ENCODE measurements at regions of chr11 and their contacts with region 1.

Region 1: GRCh38 chr11:102109896-102110760 is at the start of gene YAP1:
- DNase-seq: peak; percentile 86
- H3K4me3 ChIP-seq: peak within 1 kb of the TSS; percentile 94 to 100 (median 95)
- H3K27ac ChIP-seq: peak within 1 kb of the TSS; percentile 99 to 100
- H3K4me1 ChIP-seq: no peaks in the 10 kb centered on the region
- H3K27me3 ChIP-seq: no peaks in the 10 kb centered on the region
- CTCF ChIP-seq: peak in 1 of 3 donors; percentile 34
- POLR2A ChIP-seq: no peak
- total RNA-seq, gene YAP1: 179 to 215 (median 184) TPM

Region 2: GRCh38 chr11:101133190-101133589 is 976.9 kb before region 1 on chr11:
- intact Hi-C with region 1: no loop called
- DNase-seq: no peak
- H3K4me3 ChIP-seq: no peak overlapping the region
- H3K27ac ChIP-seq: no peak overlapping the region
- H3K4me1 ChIP-seq: no peaks in the 10 kb centered on the region
- H3K27me3 ChIP-seq: peaks cover 0 to 8% of the 10 kb centered on the region in 2 donors
- CTCF ChIP-seq: no peak
- POLR2A ChIP-seq: no peak

Region 3: GRCh38 chr11:102177974-102178631 is 68.0 kb after region 1 on chr11:
- intact Hi-C with region 1: loop called (anchors 10 kb)
- DNase-seq: peak in 1 of 2 donors; percentile 39
- H3K4me3 ChIP-seq: peak overlapping the region in 1 of 3 donors; percentile 16
- H3K27ac ChIP-seq: peak overlapping the region; percentile 87 to 90
- H3K4me1 ChIP-seq: no peaks in the 10 kb centered on the region
- H3K27me3 ChIP-seq: no peaks in the 10 kb centered on the region
- CTCF ChIP-seq: no peak
- POLR2A ChIP-seq: no peak

Region 4: DNA sequence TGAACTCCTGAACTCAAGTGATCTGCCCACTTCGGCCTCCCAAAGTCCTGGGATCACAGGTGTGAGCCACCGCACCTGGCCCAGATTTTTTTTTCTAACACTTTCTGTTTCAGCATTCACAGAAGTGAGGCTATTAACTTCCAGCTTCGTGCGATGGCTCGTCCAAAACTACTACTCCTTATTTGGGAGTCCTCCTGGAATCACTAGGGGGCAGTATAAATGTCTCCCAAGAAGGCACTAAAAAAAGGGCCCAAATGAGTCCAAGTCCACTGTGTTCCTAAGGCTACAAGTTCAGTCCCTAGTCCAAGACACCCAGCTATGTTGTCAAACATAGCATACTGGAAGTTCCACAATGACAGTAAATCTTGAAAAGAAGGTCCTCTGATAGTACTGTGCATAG is 143.9 kb after region 1 on chr11:
- intact Hi-C with region 1: loop called (anchors 10 kb)
- DNase-seq: no peak
- H3K4me3 ChIP-seq: no peak overlapping the region
- H3K27ac ChIP-seq: peak overlapping the region in 1 of 2 donors; percentile 42
- H3K4me1 ChIP-seq: no peaks in the 10 kb centered on the region
- H3K27me3 ChIP-seq: no peaks in the 10 kb centered on the region
- CTCF ChIP-seq: no peak
- POLR2A ChIP-seq: no peak